Mammary epithelial cell (primary cell): ENCODE measurements at regions of chr2 and their contacts with region 1.

Region 1: GRCh38 chr2:151828143-151828889 is at the start of gene ARL5A:
- DNase-seq: peak; percentile 93
- H3K4me3 ChIP-seq: peak within 1 kb of the TSS; percentile 78 to 88 (median 85)
- H3K27ac ChIP-seq: peak within 1 kb of the TSS; percentile 70
- H3K4me1 ChIP-seq: peaks cover 12% of the 10 kb centered on the region
- H3K27me3 ChIP-seq: no peaks in the 10 kb centered on the region
- CTCF ChIP-seq: no peak
- total RNA-seq, gene ARL5A: 38.0 to 49.8 TPM

Region 2: DNA sequence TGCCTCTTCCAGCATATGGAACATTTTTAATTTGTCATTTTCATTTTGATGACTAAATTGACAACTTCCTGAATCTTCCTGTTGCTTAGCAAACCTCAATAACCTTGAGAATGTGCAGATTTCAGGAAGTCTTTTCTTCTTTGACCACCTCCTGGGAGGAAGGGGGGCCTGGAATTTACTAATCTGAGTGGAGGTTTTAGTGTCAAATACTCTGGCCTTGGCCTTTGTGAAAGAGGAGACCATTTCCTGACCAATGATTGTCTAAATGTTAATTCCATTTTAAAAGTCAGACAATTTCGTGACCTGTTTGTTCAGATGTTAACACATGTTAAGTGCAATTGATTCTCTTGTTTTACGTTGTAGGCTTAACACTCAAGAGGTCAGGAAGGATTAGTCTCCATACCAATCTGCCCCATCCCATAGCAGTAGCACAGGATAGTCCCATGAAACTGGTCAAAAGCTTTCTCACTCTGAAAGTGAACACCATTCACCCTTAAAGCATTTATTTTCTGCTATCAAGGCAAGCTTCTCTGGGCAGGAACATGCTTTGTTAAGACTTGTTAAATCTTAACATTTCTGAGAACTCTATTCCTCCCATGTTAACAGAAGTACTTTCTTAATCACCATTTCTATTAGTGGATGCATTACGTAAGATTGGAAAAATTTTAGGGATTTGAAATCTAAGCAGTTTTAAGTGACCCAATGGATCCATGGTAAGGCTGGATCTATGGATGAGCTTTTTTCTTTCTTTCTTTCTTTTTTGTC is 1560.5 kb before region 1 on chr2:
- CTCF ChIA-PET with region 1: no interaction called
- dilution Hi-C with region 1: no loop called
- in situ Hi-C with region 1: no loop called
- intact Hi-C with region 1: no loop called
- DNase-seq: peak; percentile 85
- H3K4me3 ChIP-seq: no peak overlapping the region
- H3K27ac ChIP-seq: peak overlapping the region; percentile 25
- H3K4me1 ChIP-seq: peaks cover 23% of the 10 kb centered on the region
- H3K27me3 ChIP-seq: no peaks in the 10 kb centered on the region
- CTCF ChIP-seq: no peak

Region 3: GRCh38 chr2:151766437-151767153 is 61.7 kb before region 1 on chr2:
- CTCF ChIA-PET with region 1: no interaction called
- dilution Hi-C with region 1: no loop called
- in situ Hi-C with region 1: no loop called
- intact Hi-C with region 1: loop called (anchors 10 kb)
- DNase-seq: no peak
- H3K4me3 ChIP-seq: no peak overlapping the region
- H3K27ac ChIP-seq: no peak overlapping the region
- H3K4me1 ChIP-seq: no peaks in the 10 kb centered on the region
- H3K27me3 ChIP-seq: no peaks in the 10 kb centered on the region
- CTCF ChIP-seq: no peak

Region 4: DNA sequence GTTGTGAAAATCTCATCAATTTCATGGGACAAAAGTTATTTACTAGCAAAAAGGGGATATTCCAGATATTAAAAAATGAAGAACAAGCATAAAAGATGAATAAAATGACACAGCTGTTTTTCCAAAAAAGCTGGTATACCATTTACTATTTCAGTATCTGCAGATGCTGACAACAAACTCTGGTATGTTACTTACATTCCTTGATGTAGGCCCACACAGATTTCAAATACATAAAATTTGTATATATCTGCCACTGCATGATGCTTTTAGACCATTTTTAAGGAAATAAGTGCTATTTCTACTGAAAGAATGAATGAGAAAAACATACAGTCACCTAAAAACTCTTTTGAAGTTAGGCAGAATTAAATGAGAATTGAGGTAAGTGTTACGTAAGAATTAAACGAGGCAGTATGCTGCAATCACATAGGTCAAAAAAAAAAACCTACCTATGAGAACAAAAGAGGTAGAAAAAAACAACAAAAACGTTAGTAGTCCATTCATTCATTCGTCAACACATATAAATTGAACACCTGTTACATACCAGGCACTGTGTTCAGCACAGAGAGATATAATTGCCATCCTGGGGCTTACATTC is 32.6 kb before region 1 on chr2:
- CTCF ChIA-PET with region 1: no interaction called
- dilution Hi-C with region 1: no loop called
- in situ Hi-C with region 1: no loop called
- intact Hi-C with region 1: loop called (anchors 2 kb)
- DNase-seq: no peak
- H3K4me3 ChIP-seq: no peak overlapping the region
- H3K27ac ChIP-seq: no peak overlapping the region
- H3K4me1 ChIP-seq: no peaks in the 10 kb centered on the region
- H3K27me3 ChIP-seq: no peaks in the 10 kb centered on the region
- CTCF ChIP-seq: no peak

Region 5: GRCh38 chr2:151946899-151947822 is 118.8 kb after region 1 on chr2:
- CTCF ChIA-PET with region 1: no interaction called
- dilution Hi-C with region 1: no loop called
- in situ Hi-C with region 1: no loop called
- intact Hi-C with region 1: loop called (anchors 5 kb)
- DNase-seq: no peak
- H3K4me3 ChIP-seq: no peak overlapping the region
- H3K27ac ChIP-seq: no peak overlapping the region
- H3K4me1 ChIP-seq: peaks cover 25% of the 10 kb centered on the region
- H3K27me3 ChIP-seq: no peaks in the 10 kb centered on the region
- CTCF ChIP-seq: peak; percentile 50 to 68

Region 6: GRCh38 chr2:152005607-152006006 is 177.3 kb after region 1 on chr2:
- CTCF ChIA-PET with region 1: no interaction called
- dilution Hi-C with region 1: no loop called
- in situ Hi-C with region 1: no loop called
- intact Hi-C with region 1: loop called (anchors 10 kb)
- DNase-seq: no peak
- H3K4me3 ChIP-seq: no peak overlapping the region
- H3K27ac ChIP-seq: no peak overlapping the region
- H3K4me1 ChIP-seq: no peaks in the 10 kb centered on the region
- H3K27me3 ChIP-seq: peaks cover 3% of the 10 kb centered on the region
- CTCF ChIP-seq: no peak